GM18951 (cell line): ENCODE measurements at regions of chr10 and their contacts with region 1.

Region 1: GRCh38 chr10:74891053-74891452 is 64.7 kb downstream of the KAT6B start:
- POLR2A ChIP-seq: no peak

Region 2: GRCh38 chr10:74683621-74684364 is 207.3 kb before region 1 on chr10:
- in situ Hi-C with region 1: no loop called
- POLR2A ChIP-seq: no peak

Region 3: GRCh38 chr10:74826142-74827044 is 64.7 kb before region 1 on chr10 and contains the start of gene KAT6B:
- in situ Hi-C with region 1: no loop called
- POLR2A ChIP-seq: peak; percentile 61

Region 4: DNA sequence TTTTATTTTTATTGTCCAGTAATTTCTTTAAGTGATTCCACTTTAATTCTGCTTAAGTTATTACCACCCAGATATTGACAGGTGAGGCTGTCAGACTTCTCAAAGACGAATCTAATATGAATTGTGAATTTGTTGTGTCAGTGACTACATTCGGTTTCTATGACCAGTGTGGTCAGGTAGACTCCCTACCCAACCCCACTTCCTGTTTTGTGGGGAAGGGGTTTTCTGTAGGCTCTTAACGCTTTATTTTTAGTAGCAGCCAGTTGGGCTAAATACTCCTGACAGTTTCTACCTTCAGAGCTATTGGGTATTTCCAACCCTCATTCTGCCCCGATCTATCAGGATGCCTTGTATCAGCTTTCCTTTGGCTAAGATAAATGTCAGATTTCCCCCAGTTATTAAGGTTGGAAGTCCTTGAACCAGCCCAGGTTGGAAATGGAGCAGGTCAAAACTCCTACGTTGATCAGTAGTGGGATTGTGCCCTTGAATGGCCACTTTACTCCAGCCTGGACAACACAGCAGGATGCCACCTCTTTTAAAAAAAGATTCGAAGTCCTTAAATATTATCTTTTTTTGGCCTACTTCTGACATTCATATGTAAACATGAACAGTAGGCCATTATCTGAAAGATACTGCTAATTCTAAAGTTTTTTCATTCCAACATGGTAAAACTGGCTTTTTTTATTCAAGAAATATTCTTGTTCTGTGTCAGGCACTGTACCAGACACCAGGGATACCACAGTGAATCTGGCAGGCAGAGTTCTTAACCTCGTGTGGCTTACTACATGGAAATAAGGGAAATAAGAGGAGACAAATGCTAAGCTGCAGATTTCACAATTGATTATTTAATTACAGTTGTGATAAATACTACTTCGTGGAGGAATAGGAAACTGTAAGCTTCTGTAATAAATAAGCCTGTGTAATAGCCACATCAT is 87.1 kb after region 1 on chr10:
- in situ Hi-C with region 1: loop called (anchors 5 kb)
- POLR2A ChIP-seq: no peak